Activated T-helper 1 cell treated with anti-CD3 and anti-CD28 coated beads, Interleukin-12 subunit alpha, Interleukin-12 subunit beta, Interleukin-2, Interleukin-4 antibody, amounts not matched to agents 30 ng/mL and 10 ng/mL and 1 ng/mL, durations not matched to agents 14 hours and 24 hours and 36 hours (primary cell): ENCODE measurements at regions of chr16 and their contacts with region 1.

Region 1: DNA sequence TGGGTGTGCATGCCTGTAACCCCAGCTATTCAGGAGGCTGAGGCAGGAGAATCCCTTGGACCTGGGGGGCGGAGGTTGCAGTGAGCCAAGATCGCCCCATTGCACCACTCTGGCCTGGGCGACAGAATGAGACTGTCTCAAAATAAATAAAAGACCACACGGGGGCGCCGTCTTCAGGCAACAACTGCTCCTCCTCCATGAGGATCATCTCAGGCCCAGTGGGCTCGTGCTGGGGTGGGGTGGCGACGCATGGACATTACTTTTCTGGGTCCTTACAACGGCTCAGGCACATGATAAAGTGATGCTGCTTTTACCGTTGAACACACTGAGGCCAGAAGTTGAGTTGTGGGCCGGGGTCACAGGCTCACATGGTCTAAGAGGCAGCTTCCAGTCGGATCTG is 56.2 kb downstream of the PRMT7 start:
- DNase-seq: peak; percentile 22
- H3K4me3 Mint-ChIP-seq: no peak overlapping the region
- H3K27ac Mint-ChIP-seq: no peak overlapping the region
- H3K4me1 Mint-ChIP-seq: peaks cover 42% of the 10 kb centered on the region
- H3K27me3 Mint-ChIP-seq: peaks cover 30% of the 10 kb centered on the region

Region 2: GRCh38 chr16:68356249-68356918 is 10.6 kb before region 1 on chr16:
- intact Hi-C with region 1: loop called (anchors 1 kb)
- DNase-seq: peak; percentile 73
- H3K4me3 Mint-ChIP-seq: peak overlapping the region; percentile 58
- H3K27ac Mint-ChIP-seq: peak overlapping the region; percentile 70
- H3K4me1 Mint-ChIP-seq: peaks cover 40% of the 10 kb centered on the region
- H3K27me3 Mint-ChIP-seq: peaks cover 2% of the 10 kb centered on the region

Region 3: GRCh38 chr16:68417711-68418301 is 50.8 kb after region 1 on chr16:
- intact Hi-C with region 1: loop called (anchors 1 kb)
- DNase-seq: peak; percentile 75
- H3K4me3 Mint-ChIP-seq: peak overlapping the region; percentile 75
- H3K27ac Mint-ChIP-seq: peak overlapping the region; percentile 86
- H3K4me1 Mint-ChIP-seq: peaks cover 38% of the 10 kb centered on the region
- H3K27me3 Mint-ChIP-seq: peaks cover 6% of the 10 kb centered on the region

Region 4: DNA sequence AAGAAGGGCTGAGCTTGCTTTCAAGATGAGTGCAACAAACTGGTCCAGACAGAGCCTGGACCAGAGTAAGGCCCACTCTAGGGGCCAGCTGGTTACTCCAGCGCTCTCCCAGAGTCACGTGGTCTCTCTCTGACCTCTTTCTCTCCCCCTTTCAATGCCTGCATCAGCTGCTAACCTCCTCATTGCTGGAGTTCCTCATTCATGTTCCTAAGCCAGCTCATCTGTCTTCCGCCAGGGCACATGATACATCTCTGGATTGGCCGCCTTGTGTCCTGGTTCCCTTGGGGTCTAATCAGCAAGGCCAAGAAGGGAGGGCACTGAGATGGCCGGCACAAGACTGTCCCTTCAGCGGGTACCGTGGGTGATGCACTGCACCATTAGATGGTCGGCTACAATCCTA is 145.2 kb after region 1 on chr16:
- intact Hi-C with region 1: loop called (anchors 1 kb)
- DNase-seq: no peak
- H3K4me3 Mint-ChIP-seq: no peak overlapping the region
- H3K27ac Mint-ChIP-seq: no peak overlapping the region
- H3K4me1 Mint-ChIP-seq: no peaks in the 10 kb centered on the region
- H3K27me3 Mint-ChIP-seq: peaks cover 26% of the 10 kb centered on the region